AG04449 (cell line): ENCODE measurements at regions of chr6 and their contacts with region 1.

Region 1: DNA sequence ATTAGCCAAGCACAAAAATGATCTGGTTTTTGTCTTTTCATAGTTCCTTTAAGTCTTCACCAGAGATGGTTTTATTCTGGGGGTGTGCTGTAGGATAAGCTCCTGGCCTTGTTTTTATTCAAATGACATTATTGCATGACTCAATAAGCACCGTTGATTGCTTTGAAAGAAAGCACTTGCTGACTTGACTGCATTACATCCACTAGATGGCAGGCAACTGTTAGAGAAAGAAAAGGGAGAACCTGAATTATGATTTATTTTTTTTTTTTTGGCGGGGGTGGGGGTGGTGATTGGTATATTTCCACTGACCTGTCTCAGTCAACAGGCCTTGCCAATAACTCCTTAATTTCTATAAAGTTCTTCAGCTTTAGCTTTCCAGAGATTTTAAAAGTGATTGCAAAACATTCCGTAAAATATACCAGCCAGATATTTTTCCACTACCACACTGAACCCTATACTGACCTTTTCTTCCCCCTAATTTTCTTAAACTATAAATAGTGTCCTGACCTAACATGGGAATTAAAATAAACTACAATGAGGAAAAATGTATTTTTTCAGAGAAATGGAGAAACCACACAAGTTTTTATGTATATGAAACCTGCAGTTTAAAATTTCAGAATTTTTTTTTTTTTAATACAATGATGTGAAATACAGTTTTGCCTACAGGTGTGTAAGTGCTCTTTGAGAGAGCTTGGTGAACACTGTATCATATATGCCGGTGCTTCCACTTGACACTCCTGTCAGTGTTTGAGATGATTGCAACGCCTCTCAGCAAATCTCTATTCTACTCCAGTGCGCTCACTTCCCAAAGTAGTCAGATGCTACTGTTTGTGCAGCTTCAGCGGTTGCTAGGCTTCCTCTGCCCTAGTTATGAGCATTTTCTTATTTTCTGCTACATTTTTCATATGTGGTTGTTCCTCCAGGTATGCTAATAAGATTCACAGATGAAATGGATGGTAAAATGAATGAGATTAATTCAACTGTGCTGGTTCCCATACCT is 274.3 kb downstream of the CD109 start:
- DNase-seq: no peak
- H3K4me3 ChIP-seq: no peak overlapping the region
- CTCF ChIP-seq: peak; percentile 47

Region 2: GRCh38 chr6:73739096-73739495 is 231.2 kb before region 1 on chr6:
- CTCF ChIA-PET with region 1: interaction called, 13 read pairs
- POLR2A ChIA-PET with region 1: no interaction called
- DNase-seq: no peak
- H3K4me3 ChIP-seq: no peak overlapping the region
- CTCF ChIP-seq: peak; percentile 39

Region 3: GRCh38 chr6:73885393-73885792 is 84.9 kb before region 1 on chr6:
- CTCF ChIA-PET with region 1: no interaction called
- POLR2A ChIA-PET with region 1: no interaction called
- DNase-seq: no peak
- H3K4me3 ChIP-seq: no peak overlapping the region
- CTCF ChIP-seq: no peak

Region 4: DNA sequence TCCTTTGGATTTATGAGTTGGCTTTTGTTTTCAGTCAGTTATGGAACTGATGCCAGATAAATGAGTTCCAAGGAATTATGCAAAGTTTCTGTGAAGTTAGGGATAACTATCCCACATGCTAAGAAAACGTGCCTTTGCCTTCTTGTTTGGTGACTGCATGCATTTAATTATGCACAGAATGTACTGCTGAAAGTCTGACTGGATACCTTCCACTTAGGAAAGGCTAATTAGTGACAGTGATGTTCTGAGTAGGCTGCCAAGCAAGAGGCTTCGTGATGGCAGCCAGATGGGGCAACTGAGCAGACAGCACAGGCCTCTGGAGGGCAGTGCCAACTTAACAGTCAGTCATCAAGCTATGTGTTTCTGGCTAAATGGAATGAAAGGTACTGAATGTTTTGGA is 15.6 kb after region 1 on chr6:
- CTCF ChIA-PET with region 1: interaction called, 113 read pairs
- POLR2A ChIA-PET with region 1: no interaction called
- DNase-seq: peak; percentile 69
- H3K4me3 ChIP-seq: no peak overlapping the region
- CTCF ChIP-seq: peak; percentile 37